Dorsolateral prefrontal cortex (tissue), 120 donors: ENCODE measurements at regions of chr16 and their contacts with region 1.

Region 1: DNA sequence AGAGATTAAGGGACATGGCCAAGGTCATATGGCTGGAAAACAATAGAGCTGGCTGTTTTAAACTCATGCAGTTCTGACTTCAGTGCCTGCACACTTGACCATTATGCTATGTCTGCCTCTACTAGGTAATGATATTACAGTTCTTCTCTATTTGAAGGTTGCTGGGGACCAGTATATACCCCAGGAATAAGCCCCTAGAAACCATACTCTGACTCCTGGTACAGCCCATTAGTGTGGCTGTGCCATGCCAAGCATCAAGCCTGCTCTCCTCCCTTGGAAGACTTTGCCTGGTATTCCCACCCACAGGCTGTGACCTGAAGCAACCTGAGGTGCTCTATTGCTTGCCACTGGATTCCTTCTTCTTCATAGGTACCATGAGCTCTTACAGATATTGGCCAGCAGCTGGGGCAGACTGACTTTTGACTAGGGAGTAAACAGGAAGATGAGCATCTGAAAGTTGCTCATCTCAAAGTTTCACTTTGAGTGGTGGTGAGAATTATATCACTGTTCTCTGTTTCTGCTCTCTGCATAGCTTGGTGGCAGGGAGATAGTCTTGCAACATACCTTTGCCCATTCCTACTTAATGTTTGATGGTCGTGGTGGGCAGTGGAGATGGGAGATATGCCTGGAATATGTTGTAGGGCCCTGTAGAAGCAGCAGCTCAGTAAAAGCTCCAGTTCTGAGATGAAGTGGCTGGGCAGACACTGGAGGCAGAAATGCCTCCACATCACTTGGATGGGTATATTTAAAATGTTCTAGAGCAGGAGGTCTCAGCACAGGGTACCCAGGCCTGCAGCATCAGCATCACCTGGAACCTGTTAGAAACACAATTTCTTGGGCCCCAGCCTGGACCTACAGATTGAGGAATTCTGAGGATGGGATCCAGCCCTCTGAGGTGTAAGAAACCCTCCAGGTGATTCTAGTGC is 274.7 kb downstream of the HS3ST4 start:
- DNase-seq: no peak
- H3K4me3 ChIP-seq: no peak overlapping the region
- H3K27ac ChIP-seq: no peak overlapping the region
- H3K27me3 ChIP-seq: no peaks in the 10 kb centered on the region
- CTCF ChIP-seq: peak in 2 of 56 donors; percentile 11 to 29

Region 2: GRCh38 chr16:25950586-25951281 is 15.7 kb before region 1 on chr16:
- intact Hi-C with region 1: no loop called
- DNase-seq: no peak
- H3K4me3 ChIP-seq: no peak overlapping the region
- H3K27ac ChIP-seq: no peak overlapping the region
- H3K27me3 ChIP-seq: peaks cover 0 to 7% (median 0%) of the 10 kb centered on the region in 45 donors
- CTCF ChIP-seq: no peak

Region 3: DNA sequence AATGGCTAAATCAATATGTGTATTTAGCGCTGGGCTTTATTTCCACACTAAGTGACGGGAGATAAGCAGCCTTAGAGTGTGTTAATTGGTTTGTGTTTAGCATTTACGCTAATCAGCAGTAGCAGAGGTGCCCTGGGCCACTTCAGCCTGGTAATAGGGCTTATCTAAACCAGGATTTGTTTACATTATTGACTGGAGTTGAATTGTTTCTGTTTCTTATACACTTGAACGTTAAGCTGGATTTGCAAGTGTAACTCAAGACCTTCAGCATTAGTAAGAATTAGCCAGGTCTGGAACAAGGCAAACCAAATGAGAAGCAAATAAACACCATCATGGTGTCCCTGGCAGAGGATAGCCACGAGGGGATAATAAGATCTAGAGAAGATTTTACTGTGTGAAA is 38.9 kb after region 1 on chr16:
- intact Hi-C with region 1: loop called in 1 of 2 experiments (anchors 5 kb)
- DNase-seq: no peak
- H3K4me3 ChIP-seq: no peak overlapping the region
- H3K27ac ChIP-seq: no peak overlapping the region
- H3K27me3 ChIP-seq: peaks cover 0 to 15% (median 0%) of the 10 kb centered on the region in 45 donors
- CTCF ChIP-seq: no peak

Region 4: GRCh38 chr16:26019381-26020242 is 53.2 kb after region 1 on chr16:
- intact Hi-C with region 1: no loop called
- DNase-seq: no peak
- H3K4me3 ChIP-seq: no peak overlapping the region
- H3K27ac ChIP-seq: no peak overlapping the region
- H3K27me3 ChIP-seq: peaks cover 0 to 21% (median 0%) of the 10 kb centered on the region in 45 donors
- CTCF ChIP-seq: no peak